ENCODE measurements at regions of chr2 and their contacts with region 1.

Region 1: GRCh38 chr2:142928709-142929108 is 51.2 kb downstream of the KYNU start:
- DNase-seq: no peak
- ATAC-seq: no peak
- H3K4me3 ChIP-seq: no peak overlapping the region
- H3K27ac ChIP-seq: no peak overlapping the region
- H3K4me1 ChIP-seq: no peaks in the 10 kb centered on the region
- H3K27me3 ChIP-seq: no peaks in the 10 kb centered on the region
- CTCF ChIP-seq: no peak

Region 2: GRCh38 chr2:142380372-142380771 is 548.3 kb before region 1 on chr2:
- CTCF ChIA-PET with region 1: interaction called, 10 read pairs
- POLR2A ChIA-PET with region 1: no interaction called
- in situ Hi-C with region 1: no loop called
- intact Hi-C with region 1: no loop called
- DNase-seq: no peak
- ATAC-seq: no peak
- H3K4me3 ChIP-seq: no peak overlapping the region
- H3K27ac ChIP-seq: no peak overlapping the region
- H3K4me1 ChIP-seq: no peaks in the 10 kb centered on the region
- H3K27me3 ChIP-seq: no peaks in the 10 kb centered on the region
- CTCF ChIP-seq: no peak

Region 3: DNA sequence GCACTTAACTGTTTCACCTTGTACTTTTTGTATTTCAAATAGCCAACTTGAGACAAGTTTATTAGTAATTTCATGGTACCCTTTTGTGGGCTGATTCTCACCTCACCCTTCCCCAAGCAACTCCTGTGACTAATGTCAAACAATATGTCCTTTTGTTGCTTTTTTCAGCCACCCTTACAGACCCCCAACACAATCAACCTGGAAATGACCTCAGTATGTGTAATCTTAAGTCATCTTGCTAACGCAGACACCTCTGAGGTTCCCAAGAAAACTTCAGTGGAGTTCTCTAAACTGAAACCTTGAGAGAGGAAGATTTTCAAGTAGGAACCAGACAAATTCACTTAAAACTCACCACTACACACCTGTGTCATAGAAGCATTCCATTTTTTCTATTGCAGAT is 18.2 kb after region 1 on chr2:
- CTCF ChIA-PET with region 1: no interaction called
- POLR2A ChIA-PET with region 1: no interaction called
- in situ Hi-C with region 1: no loop called
- intact Hi-C with region 1: no loop called
- DNase-seq: no peak
- ATAC-seq: no peak
- H3K4me3 ChIP-seq: no peak overlapping the region
- H3K27ac ChIP-seq: no peak overlapping the region; the same call in 1 of the 2 replicates
- H3K4me1 ChIP-seq: peaks cover 5% of the 10 kb centered on the region; the same call in 1 of the 2 replicates
- H3K27me3 ChIP-seq: no peaks in the 10 kb centered on the region
- CTCF ChIP-seq: no peak

Region 4: GRCh38 chr2:143513081-143513480 is 584.4 kb after region 1 on chr2:
- CTCF ChIA-PET with region 1: no interaction called
- POLR2A ChIA-PET with region 1: no interaction called
- in situ Hi-C with region 1: no loop called
- intact Hi-C with region 1: no loop called
- DNase-seq: peak; percentile 24
- ATAC-seq: no peak
- H3K4me3 ChIP-seq: no peak overlapping the region
- H3K27ac ChIP-seq: no peak overlapping the region
- H3K4me1 ChIP-seq: no peaks in the 10 kb centered on the region
- H3K27me3 ChIP-seq: no peaks in the 10 kb centered on the region
- CTCF ChIP-seq: peak; percentile 52

Measured in Panc1 (cell line).